Activated CD4-positive, alpha-beta memory T cell treated with anti-CD3 and anti-CD28 coated beads, Interleukin-2, amount 10 ng/mL, durations not matched to agents 7 days and 5 days (primary cell): ENCODE measurements at regions of chr1 and their contacts with region 1.

Region 1: GRCh38 chr1:44571712-44572571 is 102.3 kb downstream of the TMEM53 start:
- DNase-seq: no peak
- H3K4me3 Mint-ChIP-seq: no peak overlapping the region
- H3K27ac Mint-ChIP-seq: no peak overlapping the region
- H3K4me1 Mint-ChIP-seq: no peaks in the 10 kb centered on the region
- H3K27me3 Mint-ChIP-seq: peaks cover 36% of the 10 kb centered on the region

Region 2: GRCh38 chr1:44557778-44558177 is 14.2 kb before region 1 on chr1:
- CTCF ChIA-PET with region 1: interaction called, 36 read pairs
- POLR2A ChIA-PET with region 1: interaction called, 4 read pairs
- DNase-seq: no peak
- H3K4me3 Mint-ChIP-seq: no peak overlapping the region
- H3K27ac Mint-ChIP-seq: no peak overlapping the region
- H3K4me1 Mint-ChIP-seq: peaks cover 19% of the 10 kb centered on the region
- H3K27me3 Mint-ChIP-seq: peaks cover 31% of the 10 kb centered on the region

Region 3: GRCh38 chr1:44584167-44584566 is 12.2 kb after region 1 on chr1:
- CTCF ChIA-PET with region 1: interaction called, 10 read pairs
- POLR2A ChIA-PET with region 1: no interaction called
- DNase-seq: no peak
- H3K4me3 Mint-ChIP-seq: no peak overlapping the region
- H3K27ac Mint-ChIP-seq: no peak overlapping the region
- H3K4me1 Mint-ChIP-seq: no peaks in the 10 kb centered on the region
- H3K27me3 Mint-ChIP-seq: peaks cover 9% of the 10 kb centered on the region

Region 4: DNA sequence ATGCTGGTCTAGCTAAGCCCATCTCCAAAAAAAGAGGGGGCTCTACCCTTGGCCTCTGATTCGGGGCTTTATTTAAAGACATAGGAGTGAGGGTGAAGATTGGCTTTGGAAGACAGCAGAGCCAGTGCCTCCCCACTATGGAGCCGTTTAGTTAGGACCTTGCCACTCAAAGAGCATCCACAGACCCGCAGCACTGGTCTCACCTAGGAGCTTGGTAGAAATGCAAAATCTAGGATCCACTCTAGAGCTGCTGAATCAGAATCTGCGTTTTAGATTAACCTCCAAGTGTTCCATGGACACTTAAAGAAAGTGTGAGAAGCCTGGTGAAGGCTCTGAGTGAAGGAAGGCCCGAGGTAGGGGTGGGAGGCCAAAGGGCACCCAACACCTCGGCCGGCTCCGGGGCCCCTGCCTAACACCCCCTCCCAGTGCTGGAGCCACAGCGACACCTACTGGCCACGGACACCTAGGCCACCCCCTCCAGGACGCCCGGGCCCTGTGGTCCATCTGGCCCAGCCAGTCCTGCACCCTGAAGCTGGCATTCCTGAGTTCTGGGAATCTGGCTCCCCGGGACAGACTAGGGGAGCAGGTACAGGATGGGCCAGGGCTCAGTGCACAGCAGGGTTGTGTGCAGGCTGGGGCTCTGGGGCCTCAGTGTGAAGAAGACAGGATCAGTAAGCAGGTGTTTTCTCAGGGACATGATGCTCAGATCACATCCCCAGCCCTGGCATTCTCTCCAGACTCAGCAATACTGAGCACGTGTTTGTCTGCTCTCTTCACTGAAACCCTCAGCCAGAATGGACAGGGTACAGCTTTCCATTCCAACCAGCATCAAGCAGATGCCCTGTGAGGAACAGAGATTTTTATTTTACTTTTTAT is 23.2 kb after region 1 on chr1:
- CTCF ChIA-PET with region 1: interaction called, 29 read pairs
- POLR2A ChIA-PET with region 1: no interaction called
- DNase-seq: peak; percentile 79
- H3K4me3 Mint-ChIP-seq: no peak overlapping the region
- H3K27ac Mint-ChIP-seq: no peak overlapping the region
- H3K4me1 Mint-ChIP-seq: no peaks in the 10 kb centered on the region
- H3K27me3 Mint-ChIP-seq: peaks cover 3% of the 10 kb centered on the region